ENCODE measurements at regions of chr17 and their contacts with region 1.

Region 1: GRCh38 chr17:58112970-58113631 is 29.9 kb downstream of the DYNLL2 start:
- DNase-seq: peak; percentile 74 to 84 (median 82)
- H3K4me3 ChIP-seq: no peak overlapping the region
- H3K27ac ChIP-seq: no peak overlapping the region
- H3K4me1 ChIP-seq: peaks cover 0 to 2% (median 0%) of the 10 kb centered on the region in 3 donors
- H3K27me3 ChIP-seq: no peaks in the 10 kb centered on the region
- CTCF ChIP-seq: peak; percentile 98

Region 2: GRCh38 chr17:57849874-57850754 is 263.0 kb before region 1 on chr17 and contains the start of gene MRPS23:
- intact Hi-C with region 1: loop called (anchors 10 kb)
- DNase-seq: peak; percentile 98 to 99 (median 99)
- H3K4me3 ChIP-seq: peak within 1 kb of the TSS; percentile 91 to 98 (median 98)
- H3K27ac ChIP-seq: peak within 1 kb of the TSS; percentile 96 to 99
- H3K4me1 ChIP-seq: peaks cover 0 to 20% (median 12%) of the 10 kb centered on the region in 3 donors
- H3K27me3 ChIP-seq: no peaks in the 10 kb centered on the region
- CTCF ChIP-seq: peak; percentile 27
- total RNA-seq, gene MRPS23: 40.2 TPM